ENCODE measurements at regions of chr17 and their contacts with region 1.

Region 1: GRCh38 chr17:18260332-18261144 is at the start of gene MIEF2:
- DNase-seq: peak; percentile 87 to 96 (median 92)
- ATAC-seq: peak; percentile 87 to 91
- H3K4me3 Mint-ChIP-seq: peak within 1 kb of the TSS; percentile 76 to 88 (median 84)
- H3K27ac Mint-ChIP-seq: peak within 1 kb of the TSS; percentile 79 to 95 (median 92)
- H3K4me1 Mint-ChIP-seq: peaks cover 18 to 56% (median 52%) of the 10 kb centered on the region in 4 donors
- H3K27me3 Mint-ChIP-seq: no peaks in the 10 kb centered on the region
- polyA plus RNA-seq, gene MIEF2: 10.7 to 14.4 (median 10.8) TPM

Region 2: GRCh38 chr17:18314731-18315561 is 54.4 kb after region 1 on chr17 and contains the starts of genes SMCR8 and TOP3A:
- POLR2A ChIA-PET with region 1: interaction called, 20 read pairs
- DNase-seq: peak; percentile 93 to 98 (median 98)
- ATAC-seq: peak; percentile 92 to 93
- H3K4me3 Mint-ChIP-seq: peak within 1 kb of the TSS; percentile 81 to 99 (median 94)
- H3K27ac Mint-ChIP-seq: peak within 1 kb of the TSS; percentile 91 to 99 (median 98)
- H3K4me1 Mint-ChIP-seq: peaks cover 35 to 88% (median 82%) of the 10 kb centered on the region in 4 donors
- H3K27me3 Mint-ChIP-seq: no peaks in the 10 kb centered on the region
- polyA plus RNA-seq, gene SMCR8: 3.0 to 6.0 (median 5.3) TPM
- polyA plus RNA-seq, gene TOP3A: 9.0 to 24.9 (median 13.5) TPM